Activated T-helper 2 cell treated with anti-CD3 and anti-CD28 coated beads, Interferon-gamma antibody, Interleukin-2, Interleukin-4, amounts not matched to agents 10 μg/mL and 5 μg/mL and 100 μg/mL, durations not matched to agents 14 hours and 24 hours and 36 hours (primary cell): ENCODE measurements at regions of chr6 and their contacts with region 1.

Region 1: GRCh38 chr6:149438855-149439254 is 38.8 kb downstream of the SUMO4 start:
- DNase-seq: no peak
- H3K4me3 Mint-ChIP-seq: no peak overlapping the region
- H3K27ac Mint-ChIP-seq: peak overlapping the region; percentile 3
- H3K4me1 Mint-ChIP-seq: peaks cover 30% of the 10 kb centered on the region
- H3K27me3 Mint-ChIP-seq: no peaks in the 10 kb centered on the region

Region 2: GRCh38 chr6:148629181-148629580 is 809.7 kb before region 1 on chr6:
- intact Hi-C with region 1: no loop called
- DNase-seq: no peak
- H3K4me3 Mint-ChIP-seq: no peak overlapping the region
- H3K27ac Mint-ChIP-seq: no peak overlapping the region
- H3K4me1 Mint-ChIP-seq: no peaks in the 10 kb centered on the region
- H3K27me3 Mint-ChIP-seq: peaks cover 17% of the 10 kb centered on the region

Region 3: DNA sequence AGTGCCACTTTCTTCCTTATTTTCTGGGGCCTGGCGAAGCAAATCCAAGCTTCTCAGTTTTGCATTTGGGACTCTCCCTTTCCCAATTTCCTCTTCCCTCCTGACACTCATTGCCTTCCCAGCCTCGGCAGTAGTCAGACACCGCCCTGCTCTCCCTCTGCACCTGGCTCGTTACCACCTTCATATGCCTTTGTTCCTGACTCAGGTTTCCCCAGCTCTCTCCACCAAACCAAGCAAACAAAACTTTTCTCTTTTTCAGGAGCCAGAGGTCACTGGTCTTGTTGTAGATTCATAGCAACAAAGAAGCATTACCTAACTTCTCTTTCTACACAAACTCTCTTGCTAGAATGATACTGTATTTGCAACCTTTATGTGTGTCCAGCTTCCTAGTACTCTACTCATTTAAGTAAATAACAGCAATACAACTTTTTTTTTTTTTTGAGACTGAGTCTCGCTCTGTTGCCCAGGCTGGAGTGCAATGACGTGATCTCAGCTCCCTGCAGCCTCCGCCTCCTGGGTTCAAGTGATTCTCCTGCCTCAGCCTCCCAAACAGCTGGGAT is 55.0 kb after region 1 on chr6:
- intact Hi-C with region 1: loop called (anchors 2 kb)
- DNase-seq: no peak
- H3K4me3 Mint-ChIP-seq: no peak overlapping the region
- H3K27ac Mint-ChIP-seq: peak overlapping the region; percentile 88
- H3K4me1 Mint-ChIP-seq: peaks cover 63% of the 10 kb centered on the region
- H3K27me3 Mint-ChIP-seq: no peaks in the 10 kb centered on the region